Transverse colon (tissue), 4 donors: ENCODE measurements at regions of chr16 and their contacts with region 1.

Region 1: GRCh38 chr16:59058250-59058649 is 324.1 kb upstream of the GOT2 start:
- DNase-seq: no peak
- H3K4me3 ChIP-seq: no peak overlapping the region
- H3K27ac ChIP-seq: no peak overlapping the region
- H3K4me1 ChIP-seq: no peaks in the 10 kb centered on the region
- H3K27me3 ChIP-seq: no peaks in the 10 kb centered on the region
- CTCF ChIP-seq: no peak
- EP300 ChIP-seq: no peak
- POLR2A ChIP-seq: no peak

Region 2: GRCh38 chr16:58999762-59000161 is 58.5 kb before region 1 on chr16:
- in situ Hi-C with region 1: loop called in 1 of 4 experiments (anchors 10 kb)
- intact Hi-C with region 1: no loop called
- DNase-seq: no peak
- H3K4me3 ChIP-seq: no peak overlapping the region
- H3K27ac ChIP-seq: no peak overlapping the region
- H3K4me1 ChIP-seq: no peaks in the 10 kb centered on the region
- H3K27me3 ChIP-seq: no peaks in the 10 kb centered on the region
- CTCF ChIP-seq: no peak
- EP300 ChIP-seq: no peak
- POLR2A ChIP-seq: no peak

Region 3: DNA sequence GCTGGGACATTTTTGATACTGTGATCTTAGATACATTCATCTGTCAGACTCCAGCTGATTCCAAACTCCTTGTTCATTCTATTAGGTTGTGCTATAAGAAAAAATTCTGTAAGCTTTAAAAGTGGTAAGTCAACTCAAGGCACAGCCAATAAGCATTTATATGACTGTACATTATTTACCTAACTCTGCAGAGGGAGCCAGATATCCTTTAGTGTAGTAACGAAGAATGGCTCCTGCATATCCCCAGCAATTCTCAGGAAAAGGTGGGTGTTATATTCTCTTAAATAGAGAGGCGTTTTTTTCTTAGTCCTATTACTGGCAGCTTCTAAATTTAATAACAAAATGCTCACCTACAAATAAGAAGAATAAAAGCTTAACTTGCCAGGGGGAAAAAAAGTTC is 50.1 kb after region 1 on chr16:
- in situ Hi-C with region 1: no loop called
- intact Hi-C with region 1: no loop called
- DNase-seq: no peak
- H3K4me3 ChIP-seq: no peak overlapping the region
- H3K27ac ChIP-seq: no peak overlapping the region
- H3K4me1 ChIP-seq: no peaks in the 10 kb centered on the region
- H3K27me3 ChIP-seq: no peaks in the 10 kb centered on the region
- CTCF ChIP-seq: no peak
- EP300 ChIP-seq: no peak
- POLR2A ChIP-seq: no peak